Activated CD4-positive, alpha-beta T cell treated with anti-CD3 and anti-CD28 coated beads for 36 hours (primary cell): ENCODE measurements at regions of chr5 and their contacts with region 1.

Region 1: GRCh38 chr5:139147483-139148087 is 50.6 kb downstream of the SIL1 start:
- DNase-seq: no peak
- ATAC-seq: no peak
- H3K4me3 Mint-ChIP-seq: no peak overlapping the region
- H3K27ac Mint-ChIP-seq: no peak overlapping the region
- H3K4me1 Mint-ChIP-seq: peaks cover 36% of the 10 kb centered on the region
- H3K27me3 Mint-ChIP-seq: no peaks in the 10 kb centered on the region

Region 2: DNA sequence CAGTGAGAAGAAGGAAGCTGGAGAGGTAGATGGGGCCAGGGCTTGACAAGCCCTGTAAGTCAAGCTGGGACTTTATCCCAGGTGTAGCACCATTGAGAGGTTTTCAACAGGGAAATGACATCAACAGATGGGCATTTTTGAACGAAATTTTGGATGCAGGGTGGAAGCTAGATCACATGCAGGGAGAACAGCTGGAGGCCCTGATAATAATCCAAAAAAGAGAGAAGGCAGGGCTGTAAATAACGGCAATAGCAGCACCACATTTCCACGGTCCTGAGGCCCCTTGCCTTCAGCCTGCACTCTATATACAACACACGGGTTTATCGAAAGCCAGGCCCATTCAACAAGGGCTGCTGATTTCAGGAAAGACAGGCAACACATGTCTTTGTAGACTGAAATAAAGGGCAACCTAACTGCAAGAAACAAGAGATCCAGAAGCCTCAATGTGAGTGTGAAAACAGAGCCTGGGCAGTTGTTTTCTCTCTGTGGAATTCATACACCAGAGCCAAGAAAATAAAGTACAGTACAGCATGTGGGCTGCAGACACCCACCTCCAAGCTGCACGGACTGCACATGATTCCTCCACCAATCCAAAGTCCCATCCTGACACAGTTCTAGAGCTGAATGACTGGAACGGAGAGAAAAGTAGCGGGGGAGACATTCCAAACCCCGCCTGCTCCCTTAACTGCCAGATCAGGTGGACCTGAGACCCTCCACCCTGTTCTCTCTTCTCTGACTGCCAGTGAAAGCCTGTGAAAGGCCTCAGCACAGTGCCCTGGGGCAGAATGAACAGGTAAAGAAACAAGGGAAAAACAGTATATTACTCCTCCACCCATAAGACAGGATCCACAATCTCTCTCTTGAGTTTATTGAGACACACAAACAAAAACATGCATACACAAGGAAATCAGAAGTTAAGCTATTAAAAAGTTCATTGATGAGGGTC is 1448.0 kb before region 1 on chr5:
- CTCF ChIA-PET with region 1: no interaction called
- POLR2A ChIA-PET with region 1: no interaction called
- intact Hi-C with region 1: no loop called
- DNase-seq: no peak
- ATAC-seq: no peak
- H3K4me3 Mint-ChIP-seq: no peak overlapping the region
- H3K27ac Mint-ChIP-seq: no peak overlapping the region
- H3K4me1 Mint-ChIP-seq: peaks cover 33% of the 10 kb centered on the region
- H3K27me3 Mint-ChIP-seq: no peaks in the 10 kb centered on the region

Region 3: GRCh38 chr5:137989419-137989818 is 1158.2 kb before region 1 on chr5:
- CTCF ChIA-PET with region 1: no interaction called
- POLR2A ChIA-PET with region 1: no interaction called
- intact Hi-C with region 1: no loop called
- DNase-seq: no peak
- ATAC-seq: no peak
- H3K4me3 Mint-ChIP-seq: no peak overlapping the region
- H3K27ac Mint-ChIP-seq: no peak overlapping the region
- H3K4me1 Mint-ChIP-seq: peaks cover 4% of the 10 kb centered on the region
- H3K27me3 Mint-ChIP-seq: no peaks in the 10 kb centered on the region

Region 4: GRCh38 chr5:138737494-138738265 is 409.9 kb before region 1 on chr5:
- CTCF ChIA-PET with region 1: no interaction called
- POLR2A ChIA-PET with region 1: no interaction called
- intact Hi-C with region 1: loop called in 1 of 2 experiments (anchors 1 kb)
- DNase-seq: no peak
- ATAC-seq: no peak
- H3K4me3 Mint-ChIP-seq: no peak overlapping the region
- H3K27ac Mint-ChIP-seq: no peak overlapping the region
- H3K4me1 Mint-ChIP-seq: peaks cover 33% of the 10 kb centered on the region
- H3K27me3 Mint-ChIP-seq: peaks cover 12% of the 10 kb centered on the region

Region 5: DNA sequence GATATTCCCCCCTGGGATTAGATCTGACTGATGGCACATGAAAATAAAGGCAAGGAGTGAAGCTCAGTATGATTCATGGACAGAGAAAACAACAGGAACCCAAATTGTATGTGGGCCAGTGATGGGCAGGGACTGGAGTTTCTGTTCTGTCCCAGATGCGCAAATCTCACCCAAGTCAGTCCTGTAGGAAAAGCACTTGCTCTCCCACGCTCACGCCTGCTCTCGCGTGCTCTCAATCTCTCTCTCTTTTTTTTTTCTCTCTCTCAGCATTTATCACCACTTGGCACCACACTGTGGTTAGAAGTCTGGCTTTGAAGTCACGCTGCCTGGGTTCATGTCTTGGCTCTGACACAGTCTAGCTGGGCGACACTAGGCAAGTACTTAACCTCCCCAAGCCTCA is 166.0 kb before region 1 on chr5:
- CTCF ChIA-PET with region 1: no interaction called
- POLR2A ChIA-PET with region 1: no interaction called
- intact Hi-C with region 1: loop called in 1 of 2 experiments (anchors 5 kb)
- DNase-seq: peak; percentile 50
- ATAC-seq: peak; percentile 49
- H3K4me3 Mint-ChIP-seq: no peak overlapping the region
- H3K27ac Mint-ChIP-seq: no peak overlapping the region
- H3K4me1 Mint-ChIP-seq: peaks cover 33% of the 10 kb centered on the region
- H3K27me3 Mint-ChIP-seq: peaks cover 4% of the 10 kb centered on the region

Region 6: DNA sequence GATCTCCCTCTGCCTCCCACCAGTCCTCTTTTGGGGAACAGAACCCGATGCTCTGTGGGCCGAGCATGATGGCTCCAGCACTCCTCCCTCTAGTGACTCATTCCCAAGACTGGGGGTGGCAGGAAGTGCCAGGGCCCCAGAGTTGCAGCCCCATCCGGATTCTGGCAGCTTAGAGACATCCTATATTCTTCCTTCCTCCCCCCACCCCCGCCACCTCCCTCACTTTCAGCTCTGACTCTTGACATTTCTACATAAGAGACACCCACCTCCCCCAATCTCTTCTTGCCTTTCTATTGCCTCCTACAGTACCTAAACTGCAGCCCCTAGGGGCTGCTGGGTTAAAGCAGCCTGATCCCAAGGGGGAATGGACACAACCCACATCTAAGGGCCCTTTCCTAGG is 98.8 kb after region 1 on chr5:
- CTCF ChIA-PET with region 1: interaction called, 4 read pairs
- POLR2A ChIA-PET with region 1: interaction called, 10 read pairs
- intact Hi-C with region 1: no loop called
- DNase-seq: peak; percentile 84
- ATAC-seq: peak; percentile 100
- H3K4me3 Mint-ChIP-seq: no peak overlapping the region
- H3K27ac Mint-ChIP-seq: peak overlapping the region; percentile 75
- H3K4me1 Mint-ChIP-seq: peaks cover 24% of the 10 kb centered on the region
- H3K27me3 Mint-ChIP-seq: peaks cover 2% of the 10 kb centered on the region